CD4-positive, alpha-beta memory T cell (primary cell): ENCODE measurements at regions of chr17 and their contacts with region 1.

Region 1: GRCh38 chr17:4997302-4998026 is at the starts of genes INCA1 and KIF1C:
- DNase-seq: peak; percentile 88 to 94 (median 92)
- H3K4me3 ChIP-seq: peak within 1 kb of the TSS; percentile 36 to 72
- H3K4me3 Mint-ChIP-seq: peak within 1 kb of the TSS; percentile 78 to 91 (median 84)
- H3K27ac ChIP-seq: peak within 1 kb of the TSS; percentile 79
- H3K27ac Mint-ChIP-seq: peak within 1 kb of the TSS; percentile 75 to 94 (median 87)
- H3K4me1 ChIP-seq: peaks cover 22% of the 10 kb centered on the region
- H3K4me1 Mint-ChIP-seq: peaks cover 10 to 42% (median 24%) of the 10 kb centered on the region in 4 donors
- H3K27me3 ChIP-seq: no peaks in the 10 kb centered on the region
- H3K27me3 Mint-ChIP-seq: no peaks in the 10 kb centered on the region
- total RNA-seq, gene INCA1: 0.36 to 0.67 TPM
- total RNA-seq, gene KIF1C: 29.8 to 36.9 TPM

Region 2: GRCh38 chr17:4939796-4940624 is 57.5 kb before region 1 on chr17 and contains the starts of genes RNF167 and SLC25A11:
- CTCF ChIA-PET with region 1: no interaction called
- POLR2A ChIA-PET with region 1: interaction called, 40 read pairs
- intact Hi-C with region 1: loop called (anchors 2 kb)
- DNase-seq: peak; percentile 96 to 99 (median 99)
- H3K4me3 ChIP-seq: peak within 1 kb of the TSS; percentile 99
- H3K4me3 Mint-ChIP-seq: peak within 1 kb of the TSS; percentile 95 to 100 (median 98)
- H3K27ac ChIP-seq: peak within 1 kb of the TSS; percentile 81
- H3K27ac Mint-ChIP-seq: peak within 1 kb of the TSS; percentile 92 to 100 (median 98)
- H3K4me1 ChIP-seq: peaks cover 57% of the 10 kb centered on the region
- H3K4me1 Mint-ChIP-seq: peaks cover 43 to 72% (median 55%) of the 10 kb centered on the region in 4 donors
- H3K27me3 ChIP-seq: no peaks in the 10 kb centered on the region
- H3K27me3 Mint-ChIP-seq: no peaks in the 10 kb centered on the region
- total RNA-seq, gene RNF167: 154 to 172 TPM
- total RNA-seq, gene SLC25A11: 43.5 to 49.5 TPM

Region 3: GRCh38 chr17:4948931-4949320 is 48.5 kb before region 1 on chr17:
- CTCF ChIA-PET with region 1: no interaction called
- POLR2A ChIA-PET with region 1: interaction called, 40 read pairs
- intact Hi-C with region 1: loop called (anchors 1 kb)
- DNase-seq: peak in 4 of 5 donors; percentile 78 to 82 (median 80)
- H3K4me3 ChIP-seq: peak overlapping the region; percentile 61 to 94
- H3K4me3 Mint-ChIP-seq: peak overlapping the region; percentile 95 to 100 (median 99)
- H3K27ac ChIP-seq: peak overlapping the region; percentile 94
- H3K27ac Mint-ChIP-seq: peak overlapping the region; percentile 92 to 100 (median 98)
- H3K4me1 ChIP-seq: peaks cover 43% of the 10 kb centered on the region
- H3K4me1 Mint-ChIP-seq: peaks cover 24 to 63% (median 39%) of the 10 kb centered on the region in 4 donors
- H3K27me3 ChIP-seq: no peaks in the 10 kb centered on the region
- H3K27me3 Mint-ChIP-seq: no peaks in the 10 kb centered on the region

Region 4: GRCh38 chr17:5031365-5032082 is 34.1 kb after region 1 on chr17:
- CTCF ChIA-PET with region 1: interaction called, 5 read pairs
- POLR2A ChIA-PET with region 1: interaction called, 18 read pairs
- intact Hi-C with region 1: no loop called
- DNase-seq: peak; percentile 77 to 83 (median 81)
- H3K4me3 ChIP-seq: peak overlapping the region in 1 of 2 donors; percentile 23
- H3K4me3 Mint-ChIP-seq: peak overlapping the region; percentile 79 to 89 (median 87)
- H3K27ac ChIP-seq: peak overlapping the region; percentile 67
- H3K27ac Mint-ChIP-seq: peak overlapping the region; percentile 90 to 94 (median 93)
- H3K4me1 ChIP-seq: peaks cover 25% of the 10 kb centered on the region
- H3K4me1 Mint-ChIP-seq: peaks cover 11 to 38% (median 17%) of the 10 kb centered on the region in 4 donors
- H3K27me3 ChIP-seq: no peaks in the 10 kb centered on the region
- H3K27me3 Mint-ChIP-seq: no peaks in the 10 kb centered on the region

Region 5: DNA sequence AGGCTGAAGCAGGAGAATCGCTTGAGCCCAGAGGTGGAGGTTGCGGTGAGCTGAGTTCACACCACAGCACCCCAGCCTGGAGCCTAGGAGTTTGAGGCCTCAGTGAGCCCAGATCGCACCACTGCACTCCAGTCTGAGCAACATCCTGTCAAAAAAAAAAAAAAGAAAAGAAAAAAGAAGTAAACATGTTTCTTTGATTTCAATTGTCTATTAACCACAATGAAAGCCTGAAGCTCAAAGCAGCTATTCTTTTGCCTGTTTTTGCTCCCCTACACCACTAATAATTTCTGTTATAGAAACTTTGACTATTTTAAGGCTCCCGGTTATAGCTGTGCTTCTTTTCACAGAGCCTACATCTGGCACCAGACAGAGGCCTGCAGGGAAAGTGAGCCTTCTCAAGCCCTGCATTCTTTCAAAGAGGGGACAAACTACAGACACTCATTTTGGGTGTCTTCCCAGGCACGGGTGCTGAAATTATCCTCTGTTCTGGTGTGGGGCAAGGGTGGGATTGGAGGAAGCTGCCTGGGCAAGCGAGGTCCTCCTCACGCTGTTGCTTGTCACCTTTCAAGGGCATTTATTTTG is 51.9 kb after region 1 on chr17:
- CTCF ChIA-PET with region 1: no interaction called
- POLR2A ChIA-PET with region 1: interaction called, 12 read pairs
- intact Hi-C with region 1: no loop called
- DNase-seq: peak; percentile 79 to 89 (median 85)
- H3K4me3 ChIP-seq: no peak overlapping the region
- H3K4me3 Mint-ChIP-seq: peak overlapping the region in 7 of 8 donors; percentile 61 to 89 (median 74)
- H3K27ac ChIP-seq: peak overlapping the region; percentile 42
- H3K27ac Mint-ChIP-seq: peak overlapping the region; percentile 93 to 98 (median 95)
- H3K4me1 ChIP-seq: peaks cover 60% of the 10 kb centered on the region
- H3K4me1 Mint-ChIP-seq: peaks cover 32 to 60% (median 47%) of the 10 kb centered on the region in 4 donors
- H3K27me3 ChIP-seq: no peaks in the 10 kb centered on the region
- H3K27me3 Mint-ChIP-seq: no peaks in the 10 kb centered on the region